Heart left ventricle (tissue), 16 donors: ENCODE measurements at regions of chr7 and their contacts with region 1.

Region 1: GRCh38 chr7:155763691-155764437 is 48.4 kb downstream of the SHH start:
- DNase-seq: no peak
- ATAC-seq: peak in 3 of 4 donors; percentile 62 to 76 (median 63)
- H3K4me3 ChIP-seq: peak overlapping the region in 1 of 12 donors; percentile 28
- H3K27ac ChIP-seq: peak overlapping the region in 11 of 12 donors; percentile 3 to 85 (median 48)
- H3K4me1 ChIP-seq: peaks cover 4 to 59% (median 22%) of the 10 kb centered on the region in 12 donors
- H3K27me3 ChIP-seq: no peaks in the 10 kb centered on the region
- CTCF ChIP-seq: no peak
- POLR2A ChIP-seq: no peak

Region 2: DNA sequence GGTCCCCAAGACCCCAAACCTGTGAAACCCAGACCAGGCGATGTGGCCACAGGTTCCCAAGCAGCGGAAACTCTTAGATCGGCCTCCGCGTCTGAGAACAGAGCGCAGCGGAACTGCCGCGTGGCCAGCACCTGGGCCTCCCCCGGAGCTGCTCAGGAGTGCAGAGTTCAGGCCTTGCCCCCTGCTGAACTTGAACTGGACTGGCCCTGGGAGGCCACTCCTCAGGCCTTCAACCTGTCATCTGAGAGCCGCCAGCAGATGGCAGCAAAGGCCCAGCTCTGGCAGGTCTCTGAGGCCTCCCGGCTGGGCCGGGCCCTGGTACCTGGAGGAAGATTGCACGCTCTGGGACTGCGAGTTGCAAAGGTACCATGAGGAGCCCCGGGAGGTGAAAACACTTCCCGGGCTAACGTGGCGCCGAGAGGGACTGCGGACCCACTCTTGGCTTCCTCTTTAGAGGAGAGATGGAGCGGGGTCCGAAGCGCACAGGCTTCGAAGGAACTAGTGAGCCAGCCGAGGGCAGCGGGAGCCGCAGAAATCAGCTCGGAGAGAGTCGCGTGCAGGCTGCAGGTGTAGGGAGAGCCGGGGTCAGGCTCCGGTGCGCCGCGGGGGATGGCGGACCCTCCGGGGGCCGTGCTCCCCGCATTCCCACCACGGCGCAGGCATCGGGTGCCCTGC is 850.1 kb before region 1 on chr7:
- intact Hi-C with region 1: loop called in 1 of 10 experiments (anchors 10 kb)
- DNase-seq: peak; percentile 79 to 93 (median 84)
- ATAC-seq: peak; percentile 85 to 98 (median 92)
- H3K4me3 ChIP-seq: peak overlapping the region in 11 of 12 donors; percentile 17 to 57 (median 44)
- H3K27ac ChIP-seq: no peak overlapping the region
- H3K4me1 ChIP-seq: peaks cover 0 to 14% (median 7%) of the 10 kb centered on the region in 12 donors
- H3K27me3 ChIP-seq: peaks cover 11 to 41% (median 16%) of the 10 kb centered on the region in 9 donors
- CTCF ChIP-seq: peak; percentile 82 to 95 (median 92)
- POLR2A ChIP-seq: no peak

Region 3: GRCh38 chr7:155676052-155676451 is 87.8 kb before region 1 on chr7:
- intact Hi-C with region 1: no loop called
- DNase-seq: no peak
- ATAC-seq: no peak
- H3K4me3 ChIP-seq: no peak overlapping the region
- H3K27ac ChIP-seq: peak overlapping the region in 2 of 12 donors; percentile 19 to 42
- H3K4me1 ChIP-seq: peaks cover 0 to 48% (median 24%) of the 10 kb centered on the region in 12 donors
- H3K27me3 ChIP-seq: no peaks in the 10 kb centered on the region
- CTCF ChIP-seq: no peak
- POLR2A ChIP-seq: no peak